ENCODE measurements at regions of chr2 and their contacts with region 1.

Region 1: DNA sequence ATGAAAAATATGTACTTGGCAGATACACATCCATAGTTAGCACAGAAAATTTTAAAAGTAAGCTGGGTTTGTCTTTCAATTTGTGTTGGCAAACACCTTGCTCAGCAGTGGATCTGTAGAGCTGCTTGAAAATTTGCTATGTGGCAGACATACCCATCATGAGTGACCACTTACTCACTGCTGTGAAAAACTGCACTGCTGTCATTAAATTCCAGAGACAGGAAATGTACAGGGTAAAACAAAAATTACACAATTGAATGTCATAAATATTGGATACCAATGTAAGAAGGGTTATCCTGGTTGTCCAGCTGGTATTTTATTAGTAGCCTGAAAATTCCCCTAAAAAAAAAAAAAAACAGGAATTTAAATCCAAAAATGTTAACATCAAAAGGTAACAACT is 24.5 kb downstream of the NIF3L1 start:
- DNase-seq: no peak
- ATAC-seq: no peak
- H3K4me3 ChIP-seq: no peak overlapping the region
- H3K27ac ChIP-seq: no peak overlapping the region
- H3K4me1 ChIP-seq: no peaks in the 10 kb centered on the region
- H3K27me3 ChIP-seq: no peaks in the 10 kb centered on the region
- CTCF ChIP-seq: no peak
- POLR2A ChIP-seq: no peak

Region 2: DNA sequence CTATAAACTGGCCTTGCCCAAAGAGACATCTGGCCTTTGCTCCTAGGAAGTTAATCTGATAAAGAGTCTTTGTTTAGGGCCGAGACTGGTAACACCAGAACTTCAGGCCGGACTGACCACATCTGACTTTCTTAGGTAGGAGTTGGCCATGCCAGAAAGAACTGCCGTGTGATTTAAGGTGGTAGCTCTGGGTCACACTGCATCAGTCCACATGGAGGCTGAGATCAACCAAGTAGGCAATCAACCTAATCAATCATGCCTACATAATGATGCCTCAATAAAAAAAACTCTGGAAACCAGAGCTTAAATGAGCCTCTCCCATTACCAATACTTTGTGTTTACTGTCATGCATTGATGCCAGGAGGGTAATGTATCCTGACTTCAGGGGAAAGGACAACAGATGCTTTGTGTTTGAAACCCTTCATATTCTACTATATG is 93.9 kb after region 1 on chr2:
- intact Hi-C with region 1: loop called in 1 of 10 experiments (anchors 10 kb)
- DNase-seq: no peak
- ATAC-seq: no peak
- H3K4me3 ChIP-seq: no peak overlapping the region
- H3K27ac ChIP-seq: no peak overlapping the region
- H3K4me1 ChIP-seq: no peaks in the 10 kb centered on the region
- H3K27me3 ChIP-seq: no peaks in the 10 kb centered on the region
- CTCF ChIP-seq: no peak
- POLR2A ChIP-seq: no peak